Naive thymus-derived CD8-positive, alpha-beta T cell (primary cell): ENCODE measurements at regions of chr2 and their contacts with region 1.

Region 1: GRCh38 chr2:218898109-218898878 is 17.6 kb downstream of the WNT10A start:
- DNase-seq: peak; percentile 52 to 89 (median 76)
- ATAC-seq: peak; percentile 16 to 17
- H3K4me3 Mint-ChIP-seq: peak overlapping the region; percentile 58 to 92 (median 86)
- H3K27ac Mint-ChIP-seq: peak overlapping the region; percentile 41 to 94 (median 78)
- H3K4me1 Mint-ChIP-seq: peaks cover 32 to 47% (median 45%) of the 10 kb centered on the region in 4 donors
- H3K27me3 Mint-ChIP-seq: peaks cover 15 to 30% (median 27%) of the 10 kb centered on the region in 5 donors

Region 2: DNA sequence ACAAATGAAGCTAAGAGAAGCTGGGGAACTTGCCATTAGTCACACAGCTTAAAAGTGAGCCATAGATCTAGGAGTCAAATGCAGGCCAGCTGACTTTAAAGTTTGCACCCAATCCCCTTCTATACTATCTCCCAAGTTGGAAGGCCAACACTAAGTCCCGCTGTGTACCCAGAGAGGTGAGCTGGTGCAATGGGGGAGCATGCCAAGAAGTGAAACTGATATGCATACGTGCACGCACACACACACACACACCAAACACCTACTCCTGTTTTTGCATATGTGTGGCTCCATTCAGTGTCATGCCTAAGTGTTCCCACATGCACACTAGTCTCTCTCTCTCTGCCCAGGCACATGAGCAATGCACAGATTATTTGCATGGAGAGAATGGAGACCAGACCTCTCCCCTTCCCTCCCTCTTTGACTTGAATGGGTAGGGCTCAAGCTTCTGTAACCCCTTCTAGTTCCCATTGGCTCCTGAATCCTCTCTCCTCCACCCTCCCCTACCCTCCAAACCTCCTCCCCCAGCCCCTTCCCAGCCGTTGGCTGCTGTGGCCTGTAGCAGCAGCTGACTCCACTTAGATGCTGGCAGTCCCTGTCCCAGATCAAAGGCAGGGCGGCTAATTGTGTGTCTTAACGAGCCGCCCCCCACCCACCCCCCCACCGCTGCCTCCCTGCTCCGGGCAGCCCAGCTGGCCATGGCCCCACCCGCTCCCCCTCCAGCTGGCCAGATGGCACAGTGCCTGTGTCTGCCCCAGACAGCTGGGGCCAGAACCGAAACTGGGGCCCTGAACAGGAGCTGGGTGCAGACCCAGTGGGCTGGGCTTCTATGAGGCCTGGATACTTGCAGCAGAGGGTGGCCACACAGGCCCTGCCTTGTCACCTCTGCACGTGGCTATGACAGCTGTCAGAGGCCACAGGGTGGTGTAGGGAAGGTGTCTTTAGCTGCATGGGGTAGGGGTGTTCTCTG is 12.0 kb before region 1 on chr2:
- POLR2A ChIA-PET with region 1: interaction called, 331 read pairs
- DNase-seq: peak in 1 of 10 donors; percentile 45
- ATAC-seq: no peak
- H3K4me3 Mint-ChIP-seq: no peak overlapping the region
- H3K27ac Mint-ChIP-seq: peak overlapping the region in 4 of 10 donors; percentile 51 to 79 (median 66)
- H3K4me1 Mint-ChIP-seq: peaks cover 21 to 46% (median 37%) of the 10 kb centered on the region in 4 donors
- H3K27me3 Mint-ChIP-seq: peaks cover 0 to 4% (median 0%) of the 10 kb centered on the region in 5 donors

Region 3: GRCh38 chr2:218959141-218959731 is 60.9 kb after region 1 on chr2 and contains the start of gene CDK5R2:
- POLR2A ChIA-PET with region 1: no interaction called
- DNase-seq: peak; percentile 31 to 79 (median 52)
- ATAC-seq: peak; percentile 87 to 90
- H3K4me3 Mint-ChIP-seq: peak within 1 kb of the TSS; percentile 44 to 82 (median 70)
- H3K27ac Mint-ChIP-seq: peak within 1 kb of the TSS in 1 of 10 donors; percentile 32
- H3K4me1 Mint-ChIP-seq: peaks cover 11 to 19% (median 15%) of the 10 kb centered on the region in 4 donors
- H3K27me3 Mint-ChIP-seq: peaks cover 32 to 83% (median 59%) of the 10 kb centered on the region in 5 donors
- polyA plus RNA-seq, gene CDK5R2: not detected

Region 4: DNA sequence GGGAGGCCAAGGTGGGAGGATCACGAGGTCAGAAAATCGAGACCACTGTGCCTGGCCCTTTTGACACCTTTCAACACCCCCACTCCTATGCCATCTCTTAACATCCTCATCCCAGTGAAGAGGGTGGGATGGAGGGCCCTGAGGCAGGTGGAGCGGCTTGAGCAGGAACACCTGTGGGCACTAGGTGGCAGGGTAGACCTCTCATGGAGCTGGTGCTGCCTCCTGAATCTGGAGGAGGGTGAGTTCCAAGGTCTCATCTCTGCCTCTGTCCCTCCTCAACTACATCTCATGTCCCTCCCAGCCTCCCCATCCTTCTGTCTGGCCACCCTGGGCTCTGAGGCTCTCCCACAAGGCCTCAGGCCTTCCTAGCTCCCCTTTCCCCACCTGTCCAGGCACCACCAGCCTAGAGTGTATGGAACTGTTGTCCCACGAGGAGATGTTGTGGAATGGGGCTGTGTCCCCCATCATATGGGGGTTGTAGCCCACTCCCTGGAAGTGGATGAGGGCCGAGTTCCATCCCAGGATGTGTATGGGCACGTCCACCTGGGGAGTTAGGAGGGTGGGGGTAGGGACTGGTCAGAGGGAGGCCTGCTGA is 112.0 kb after region 1 on chr2:
- POLR2A ChIA-PET with region 1: no interaction called
- DNase-seq: no peak
- ATAC-seq: peak; percentile 59 to 65
- H3K4me3 Mint-ChIP-seq: no peak overlapping the region
- H3K27ac Mint-ChIP-seq: no peak overlapping the region
- H3K4me1 Mint-ChIP-seq: peaks cover 0 to 2% (median 0%) of the 10 kb centered on the region in 4 donors
- H3K27me3 Mint-ChIP-seq: peaks cover 10 to 72% (median 42%) of the 10 kb centered on the region in 5 donors